H1 (cell line): ENCODE measurements at regions of chr17 and their contacts with region 1.

Region 1: DNA sequence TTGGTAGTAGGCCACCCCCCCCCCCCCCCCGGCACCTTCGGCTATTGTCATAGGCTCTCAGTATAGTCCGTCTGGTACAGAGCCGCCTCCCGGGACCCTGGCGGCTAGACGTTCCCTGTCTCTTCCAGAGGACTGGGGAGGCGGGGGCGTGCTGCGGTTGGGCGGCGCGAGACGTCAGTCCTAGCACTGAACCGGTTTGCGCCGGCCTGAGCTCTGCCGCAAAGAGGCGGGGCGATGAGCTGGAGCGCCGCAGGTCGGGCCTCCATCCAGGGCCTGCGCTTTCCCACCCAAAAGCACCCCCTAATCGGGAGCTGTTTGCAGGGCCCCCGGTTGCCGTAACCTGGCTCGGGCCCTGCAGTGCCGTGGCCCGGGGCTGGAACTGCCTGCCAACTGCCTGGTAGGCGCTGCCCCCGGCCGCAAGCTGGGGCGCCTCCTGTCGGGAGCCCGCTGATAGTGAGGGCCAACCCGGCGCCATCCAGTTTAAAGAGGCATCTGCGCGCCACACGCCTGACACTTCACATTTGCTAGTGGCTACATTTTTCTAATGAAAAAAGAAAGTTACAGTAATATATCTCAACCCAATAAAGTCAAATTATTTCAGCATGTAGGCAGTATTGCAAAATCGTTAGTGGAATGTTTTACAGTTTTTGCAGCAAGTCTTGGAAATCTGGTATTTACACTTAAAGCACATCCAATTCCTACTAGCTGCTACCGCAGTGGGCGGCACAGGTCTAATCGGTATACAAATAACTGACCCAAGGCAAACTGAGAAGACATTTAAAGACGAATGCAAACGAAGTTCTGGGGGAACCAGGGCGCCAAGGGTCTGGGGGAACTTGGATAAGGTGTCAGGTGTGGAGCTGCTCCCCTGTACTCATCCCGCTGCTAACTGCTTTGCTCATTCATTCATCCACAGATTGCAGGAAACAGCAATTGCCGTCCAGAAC is 748 bp upstream of the USP22 start:
- DNase-seq: peak; percentile 92 to 94
- H3K4me3 ChIP-seq: peak overlapping the region; percentile 60 to 67 (median 62)
- H3K27ac ChIP-seq: peak overlapping the region; percentile 91
- H3K4me1 ChIP-seq: peaks cover 0 to 11% (median 0%) of the 10 kb centered on the region in 4 experiments; a peak in 5 of 7 replicates
- H3K27me3 ChIP-seq: no peaks in the 10 kb centered on the region
- CTCF ChIP-seq: peak; percentile 59 to 77 (median 74)
- EP300 ChIP-seq: no peak
- POLR2A ChIP-seq: peak; percentile 72 to 89
- RAD21 ChIP-seq: peak; percentile 33 to 44

Region 2: DNA sequence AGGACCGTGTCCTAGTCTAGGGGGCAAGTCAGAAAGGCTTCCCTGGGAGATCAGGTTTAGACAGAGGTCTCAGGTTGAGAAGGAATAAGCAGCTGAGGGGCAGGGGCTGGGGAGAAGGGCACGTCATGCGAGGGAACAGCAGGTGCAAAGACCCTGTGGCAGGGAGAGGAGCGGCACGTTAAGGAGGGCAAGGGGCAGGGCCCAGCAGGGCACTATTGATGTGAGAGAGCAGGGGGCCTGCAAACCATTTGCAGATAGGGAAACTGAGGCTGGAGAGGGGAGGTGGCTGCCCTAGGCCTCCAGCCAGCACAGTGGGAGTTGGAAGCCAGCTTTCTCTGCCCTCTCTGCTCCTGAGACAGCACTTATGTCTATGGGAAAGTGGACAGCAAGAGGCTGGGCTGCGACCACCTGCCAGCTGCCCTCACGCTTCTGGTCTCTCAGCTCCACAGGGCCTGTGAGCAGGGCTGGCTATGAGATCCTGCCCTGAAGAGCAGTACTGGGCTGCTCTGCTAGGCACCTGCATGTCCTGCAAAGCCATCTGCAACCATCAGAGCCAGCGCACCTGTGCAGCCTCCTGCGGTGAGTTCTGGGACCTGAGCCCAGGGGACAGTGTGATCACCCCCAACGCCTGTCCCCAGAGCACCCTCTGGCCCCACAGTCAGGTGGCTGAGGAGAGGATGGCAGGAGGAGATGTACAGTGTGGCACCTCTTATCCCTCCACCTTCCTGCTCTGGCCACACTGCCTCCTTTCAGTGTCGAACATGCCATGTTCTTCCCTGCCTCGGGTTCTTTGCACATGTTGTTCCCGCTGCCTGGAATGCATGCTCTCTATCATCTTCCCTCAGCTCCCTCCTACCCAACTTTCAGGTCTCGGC is 62.3 kb before region 1 on chr17:
- CTCF ChIA-PET with region 1: no interaction called
- POLR2A ChIA-PET with region 1: no interaction called
- DNase-seq: peak in 1 of 2 experiments; percentile 37
- H3K4me3 ChIP-seq: no peak overlapping the region
- H3K27ac ChIP-seq: no peak overlapping the region
- H3K4me1 ChIP-seq: no peaks in the 10 kb centered on the region; a peak in 1 of 7 replicates
- H3K27me3 ChIP-seq: no peaks in the 10 kb centered on the region
- CTCF ChIP-seq: no peak
- EP300 ChIP-seq: no peak
- POLR2A ChIP-seq: no peak
- RAD21 ChIP-seq: no peak

Region 3: GRCh38 chr17:20992987-20993862 is 50.3 kb before region 1 on chr17:
- CTCF ChIA-PET with region 1: no interaction called
- POLR2A ChIA-PET with region 1: interaction called, 10 read pairs
- DNase-seq: peak; percentile 79 to 89
- H3K4me3 ChIP-seq: no peak overlapping the region
- H3K27ac ChIP-seq: peak overlapping the region; percentile 54; the same call in 1 of the 2 replicates
- H3K4me1 ChIP-seq: peaks cover 0 to 5% (median 2%) of the 10 kb centered on the region in 4 experiments; a peak in 4 of 7 replicates
- H3K27me3 ChIP-seq: no peaks in the 10 kb centered on the region
- CTCF ChIP-seq: peak; percentile 75 to 87 (median 79)
- EP300 ChIP-seq: no peak
- POLR2A ChIP-seq: 0 out of 3 replicates have a peak, but pooled peaks of 1 of the 2 experiments have one; percentile 32
- RAD21 ChIP-seq: peak; percentile 76 to 78

Region 4: DNA sequence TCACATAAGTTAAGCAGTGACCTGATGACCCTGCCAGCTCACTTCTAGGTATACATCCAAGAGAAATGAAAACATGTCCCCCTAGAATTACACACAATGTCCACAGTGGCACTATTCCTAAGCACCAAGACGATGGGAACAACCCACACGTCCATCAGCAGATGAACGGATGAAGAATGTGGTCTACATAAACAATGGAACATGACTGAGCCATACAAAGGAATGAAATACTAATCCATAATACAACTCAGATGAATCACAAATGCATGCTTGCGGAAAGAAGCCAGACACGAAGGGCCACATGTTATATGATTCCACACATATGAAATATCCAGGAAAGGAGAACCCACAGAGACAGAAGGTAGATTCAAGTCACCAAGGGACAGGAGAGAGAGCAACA is 18.1 kb before region 1 on chr17:
- CTCF ChIA-PET with region 1: interaction called, 5 read pairs
- POLR2A ChIA-PET with region 1: interaction called, 31 read pairs
- DNase-seq: no peak
- H3K4me3 ChIP-seq: no peak overlapping the region
- H3K27ac ChIP-seq: no peak overlapping the region
- H3K4me1 ChIP-seq: peaks cover 0 to 6% (median 0%) of the 10 kb centered on the region in 4 experiments; a peak in 2 of 7 replicates
- H3K27me3 ChIP-seq: no peaks in the 10 kb centered on the region
- CTCF ChIP-seq: no peak
- EP300 ChIP-seq: no peak
- POLR2A ChIP-seq: no peak
- RAD21 ChIP-seq: no peak

Region 5: DNA sequence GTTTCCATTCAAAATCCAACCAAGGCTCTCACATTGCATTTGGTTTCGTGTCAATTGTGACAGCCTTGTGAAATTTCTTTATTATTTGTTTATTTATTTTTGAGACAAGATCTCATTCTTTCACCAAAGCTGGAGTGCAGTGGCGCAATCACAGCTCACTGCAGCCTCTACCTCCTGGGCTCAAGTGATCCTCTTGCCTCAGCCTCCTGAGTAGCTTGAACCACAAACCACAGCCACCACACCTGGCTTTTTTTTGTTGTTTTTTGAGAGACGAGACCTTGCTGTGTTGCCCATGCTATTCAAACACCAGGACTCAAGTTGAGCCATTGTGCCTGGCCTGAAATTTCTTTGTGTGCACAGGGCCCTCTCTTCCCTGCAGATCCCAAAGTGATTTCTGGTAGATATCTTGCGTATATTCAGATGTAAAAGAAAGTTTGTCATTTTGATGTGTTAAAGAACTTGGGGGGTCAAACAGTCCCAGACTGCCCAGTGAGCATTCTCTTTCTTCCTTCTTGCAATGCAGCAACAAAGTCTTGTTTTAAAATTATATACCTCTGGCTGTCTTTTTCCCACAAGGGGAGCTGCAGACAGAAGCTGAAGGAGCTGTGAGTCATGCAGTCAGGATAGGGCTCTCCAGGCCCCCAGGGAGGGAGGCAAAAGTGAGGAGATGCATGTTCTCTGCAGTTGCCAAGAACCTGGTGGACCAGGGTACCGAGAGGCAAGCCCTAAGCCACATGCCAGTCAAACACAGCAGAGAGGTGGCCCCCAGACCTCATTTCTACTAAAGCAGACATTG is 14.7 kb after region 1 on chr17:
- CTCF ChIA-PET with region 1: interaction called, 10 read pairs
- POLR2A ChIA-PET with region 1: interaction called, 25 read pairs
- DNase-seq: no peak
- H3K4me3 ChIP-seq: no peak overlapping the region
- H3K27ac ChIP-seq: no peak overlapping the region
- H3K4me1 ChIP-seq: peaks cover 0 to 3% (median 0%) of the 10 kb centered on the region in 4 experiments; a peak in 4 of 7 replicates
- H3K27me3 ChIP-seq: no peaks in the 10 kb centered on the region
- CTCF ChIP-seq: 0 out of 4 replicates have a peak, but pooled peaks of 1 of the 3 experiments have one; percentile 6
- EP300 ChIP-seq: no peak
- POLR2A ChIP-seq: no peak
- RAD21 ChIP-seq: peak in 1 of 2 experiments; percentile 25; a peak in 1 of 4 replicates

Region 6: DNA sequence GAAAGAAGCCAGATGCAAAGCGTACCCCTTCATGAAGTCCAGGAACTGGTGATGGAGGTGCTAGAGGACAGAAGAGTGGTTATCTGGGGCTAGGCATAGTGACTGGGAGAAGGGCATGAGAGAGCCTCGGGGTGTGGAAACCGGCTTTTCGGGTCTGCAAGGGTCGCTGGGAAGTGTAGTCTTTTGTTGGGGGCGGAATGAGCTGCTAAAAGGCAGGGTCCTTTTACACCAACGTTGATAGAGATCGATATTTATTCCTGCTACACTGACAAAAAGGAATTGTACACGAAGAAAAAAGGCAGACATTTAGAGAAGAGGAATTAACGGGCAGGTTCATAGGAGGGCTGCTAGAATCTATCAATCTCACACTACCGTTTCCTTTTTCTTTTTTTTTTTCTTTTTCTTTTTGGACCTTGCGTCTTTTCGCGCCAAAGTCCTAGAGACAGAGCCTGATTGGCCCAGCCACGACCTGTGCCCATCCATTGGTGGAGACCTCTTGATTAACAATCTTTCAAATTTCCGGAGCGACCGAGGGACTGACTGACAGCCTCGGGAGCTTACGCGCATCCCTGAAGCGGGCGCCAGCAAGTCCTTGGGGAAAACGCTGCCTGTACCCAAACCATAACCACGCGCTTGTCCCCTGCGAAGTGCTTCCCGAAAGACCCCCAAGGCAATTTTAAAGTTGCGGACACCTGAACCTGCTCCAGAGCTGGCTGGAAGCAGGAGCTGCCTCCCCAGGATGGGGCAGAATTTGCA is 55.6 kb after region 1 on chr17:
- CTCF ChIA-PET with region 1: interaction called, 13 read pairs
- POLR2A ChIA-PET with region 1: interaction called, 20 read pairs
- DNase-seq: peak; percentile 73 to 77
- H3K4me3 ChIP-seq: peak overlapping the region; percentile 68 to 93 (median 76)
- H3K27ac ChIP-seq: peak overlapping the region; percentile 98
- H3K4me1 ChIP-seq: no peaks in the 10 kb centered on the region; a peak in 1 of 7 replicates
- H3K27me3 ChIP-seq: no peaks in the 10 kb centered on the region
- CTCF ChIP-seq: no peak
- EP300 ChIP-seq: no peak
- POLR2A ChIP-seq: peak in 1 of 2 experiments; percentile 78; a peak in 2 of 3 replicates
- RAD21 ChIP-seq: no peak

Region 7: GRCh38 chr17:21108651-21109050 is 65.1 kb after region 1 on chr17:
- CTCF ChIA-PET with region 1: interaction called, 4 read pairs
- POLR2A ChIA-PET with region 1: interaction called, 17 read pairs
- DNase-seq: no peak
- H3K4me3 ChIP-seq: peak overlapping the region in 1 of 4 experiments; percentile 23; a peak in 1 of 8 replicates
- H3K27ac ChIP-seq: no peak overlapping the region
- H3K4me1 ChIP-seq: peaks cover 1 to 7% (median 6%) of the 10 kb centered on the region in 4 experiments; a peak in 5 of 7 replicates
- H3K27me3 ChIP-seq: no peaks in the 10 kb centered on the region
- CTCF ChIP-seq: no peak
- EP300 ChIP-seq: no peak
- POLR2A ChIP-seq: no peak
- RAD21 ChIP-seq: no peak

Region 8: DNA sequence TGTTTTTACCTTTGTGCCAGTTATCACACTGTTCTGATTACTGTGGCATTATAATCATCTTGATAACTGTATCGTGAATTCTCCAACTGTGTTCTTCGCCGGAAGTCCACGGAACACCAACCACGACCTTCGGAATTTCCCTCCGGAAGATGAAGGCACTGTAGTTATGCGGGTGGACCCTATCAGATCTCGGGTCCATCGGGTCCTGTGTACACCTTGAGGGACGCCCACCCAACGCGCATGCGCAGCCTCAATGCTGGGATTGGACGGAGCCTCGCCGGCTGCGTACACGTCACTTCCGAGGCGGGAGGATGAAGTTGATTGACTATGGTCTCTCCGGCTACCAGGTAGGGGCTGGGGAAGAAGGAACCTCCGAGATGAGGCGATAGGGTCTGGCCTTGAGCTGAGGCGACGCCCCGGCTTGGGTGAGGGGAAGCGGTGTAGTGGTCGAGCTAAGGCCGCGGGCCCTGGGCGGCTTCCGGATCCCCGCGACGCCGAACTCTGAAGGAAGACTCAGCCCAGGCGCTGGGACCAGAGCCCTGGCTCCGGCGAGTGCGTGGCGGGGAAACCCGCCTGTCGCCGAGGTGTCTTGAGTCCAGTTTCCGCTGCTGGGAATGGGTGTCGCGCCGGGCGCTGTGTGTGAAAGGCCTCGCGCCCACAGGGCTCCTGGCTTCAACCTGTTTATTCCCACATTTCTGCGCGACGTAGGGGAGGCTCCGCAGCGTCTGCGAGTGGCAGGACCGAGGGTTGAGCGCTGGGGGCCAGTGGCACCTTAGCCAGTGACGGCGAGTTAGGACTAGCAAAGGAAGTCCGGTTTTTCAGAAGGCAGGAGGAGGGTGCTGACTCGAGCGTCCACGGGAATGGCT is 83.3 kb after region 1 on chr17 and contains the start of gene DHRS7B:
- CTCF ChIA-PET with region 1: interaction called, 3 read pairs
- POLR2A ChIA-PET with region 1: interaction called, 13 read pairs
- DNase-seq: peak; percentile 92 to 98
- H3K4me3 ChIP-seq: peak within 1 kb of the TSS; percentile 66 to 84 (median 76)
- H3K27ac ChIP-seq: peak within 1 kb of the TSS; percentile 87
- H3K4me1 ChIP-seq: peaks cover 0 to 4% (median 2%) of the 10 kb centered on the region in 4 experiments; a peak in 4 of 7 replicates
- H3K27me3 ChIP-seq: no peaks in the 10 kb centered on the region; a peak in 1 of 7 replicates
- CTCF ChIP-seq: no peak
- EP300 ChIP-seq: no peak
- POLR2A ChIP-seq: peak in 1 of 2 experiments; percentile 90; a peak in 2 of 3 replicates
- RAD21 ChIP-seq: no peak; a peak in 1 of 4 replicates
- total RNA-seq, gene DHRS7B: 11.0 and 12.4 TPM in 2 replicates

Region 9: DNA sequence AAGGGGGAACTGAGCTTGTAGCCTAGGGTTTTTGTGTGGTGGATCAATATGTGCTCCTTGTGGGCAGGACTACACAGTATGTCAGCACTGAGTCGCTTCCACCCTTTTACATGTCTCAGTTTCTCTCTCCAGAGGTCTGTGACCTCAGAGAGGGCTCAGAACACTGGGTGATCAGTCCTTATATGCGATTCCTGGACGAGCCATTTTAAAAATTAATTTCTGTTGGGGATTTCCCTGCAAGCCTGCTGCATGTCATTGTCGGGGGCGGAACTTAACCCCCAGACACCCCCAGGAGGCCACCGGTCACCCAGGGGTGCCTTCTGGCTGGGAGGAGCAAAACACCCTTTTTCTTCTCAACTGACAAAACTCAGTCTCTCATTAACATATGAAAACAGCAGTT is 97.4 kb after region 1 on chr17:
- CTCF ChIA-PET with region 1: no interaction called
- POLR2A ChIA-PET with region 1: no interaction called
- DNase-seq: no peak
- H3K4me3 ChIP-seq: no peak overlapping the region
- H3K27ac ChIP-seq: no peak overlapping the region
- H3K4me1 ChIP-seq: peaks cover 0 to 3% (median 0%) of the 10 kb centered on the region in 4 experiments; a peak in 1 of 7 replicates
- H3K27me3 ChIP-seq: no peaks in the 10 kb centered on the region
- CTCF ChIP-seq: no peak
- EP300 ChIP-seq: no peak
- POLR2A ChIP-seq: no peak
- RAD21 ChIP-seq: no peak